HCT116 (cell line): ENCODE measurements at regions of chr18 and their contacts with region 1.

Region 1: GRCh38 chr18:78984941-78985784 is 5.5 kb downstream of the SALL3 start:
- DNase-seq: no peak
- ATAC-seq: peak; percentile 44; the same call in 1 of the 2 replicates
- H3K4me3 ChIP-seq: no peak overlapping the region
- H3K27ac ChIP-seq: no peak overlapping the region
- H3K4me1 ChIP-seq: no peaks in the 10 kb centered on the region
- H3K27me3 ChIP-seq: peaks cover 15% of the 10 kb centered on the region
- CTCF ChIP-seq: peak; percentile 12 to 39 (median 32); a peak in 2 of 6 replicates
- POLR2A ChIP-seq: no peak
- RAD21 ChIP-seq: peak; percentile 46

Region 2: GRCh38 chr18:78875268-78875997 is 109.7 kb before region 1 on chr18:
- CTCF ChIA-PET with region 1: interaction called, 5 read pairs
- POLR2A ChIA-PET with region 1: no interaction called
- RAD21 ChIA-PET with region 1: no interaction called
- intact Hi-C with region 1: loop called (anchors 1 kb)
- DNase-seq: peak; percentile 19
- ATAC-seq: peak; percentile 81
- H3K4me3 ChIP-seq: no peak overlapping the region
- H3K27ac ChIP-seq: no peak overlapping the region
- H3K4me1 ChIP-seq: no peaks in the 10 kb centered on the region
- H3K27me3 ChIP-seq: 0 out of 2 replicates have a peak, but pooled peaks cover 7% of the 10 kb centered on the region
- CTCF ChIP-seq: peak; percentile 49 to 79 (median 75); a peak in 5 of 6 replicates
- POLR2A ChIP-seq: no peak
- RAD21 ChIP-seq: peak; percentile 47

Region 3: DNA sequence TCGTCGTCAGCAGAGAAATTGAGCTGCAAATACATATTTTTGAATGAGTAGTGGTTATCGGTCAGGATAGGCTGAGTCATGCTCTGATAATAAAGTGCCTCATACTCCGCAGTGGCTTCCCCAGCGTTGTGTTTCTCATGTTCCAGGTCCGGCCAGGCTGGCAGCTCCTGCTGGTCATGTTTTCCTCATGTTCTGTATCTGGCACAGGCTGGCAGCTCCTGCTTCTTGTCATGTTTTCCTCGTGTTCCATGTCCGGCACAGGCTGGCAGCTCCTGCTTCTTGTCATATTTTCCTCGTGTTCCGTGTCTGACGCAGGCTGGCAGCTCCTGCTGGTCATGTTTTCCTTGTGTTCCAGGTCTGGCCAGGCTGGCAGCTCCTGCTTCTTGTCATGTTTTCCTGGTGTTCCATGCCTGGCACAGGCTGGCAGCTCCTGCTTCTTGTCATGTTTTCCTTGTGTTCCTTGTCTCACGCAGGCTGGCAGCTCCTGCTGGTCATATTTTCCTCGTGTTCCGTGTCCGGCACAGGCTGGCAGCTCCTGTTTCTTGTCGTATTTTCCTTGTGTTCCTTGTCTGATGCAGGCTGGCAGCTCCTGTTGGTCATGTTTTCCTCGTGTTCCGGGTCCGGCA is 232.9 kb after region 1 on chr18:
- CTCF ChIA-PET with region 1: no interaction called
- POLR2A ChIA-PET with region 1: no interaction called
- RAD21 ChIA-PET with region 1: no interaction called
- intact Hi-C with region 1: no loop called
- DNase-seq: no peak
- ATAC-seq: no peak
- H3K4me3 ChIP-seq: no peak overlapping the region
- H3K27ac ChIP-seq: no peak overlapping the region
- H3K4me1 ChIP-seq: no peaks in the 10 kb centered on the region
- H3K27me3 ChIP-seq: no peaks in the 10 kb centered on the region
- CTCF ChIP-seq: no peak
- POLR2A ChIP-seq: no peak
- RAD21 ChIP-seq: no peak